Right ventricle myocardium inferior (tissue), 1 donor: ENCODE measurements at regions of chr9 and their contacts with region 1.

Region 1: DNA sequence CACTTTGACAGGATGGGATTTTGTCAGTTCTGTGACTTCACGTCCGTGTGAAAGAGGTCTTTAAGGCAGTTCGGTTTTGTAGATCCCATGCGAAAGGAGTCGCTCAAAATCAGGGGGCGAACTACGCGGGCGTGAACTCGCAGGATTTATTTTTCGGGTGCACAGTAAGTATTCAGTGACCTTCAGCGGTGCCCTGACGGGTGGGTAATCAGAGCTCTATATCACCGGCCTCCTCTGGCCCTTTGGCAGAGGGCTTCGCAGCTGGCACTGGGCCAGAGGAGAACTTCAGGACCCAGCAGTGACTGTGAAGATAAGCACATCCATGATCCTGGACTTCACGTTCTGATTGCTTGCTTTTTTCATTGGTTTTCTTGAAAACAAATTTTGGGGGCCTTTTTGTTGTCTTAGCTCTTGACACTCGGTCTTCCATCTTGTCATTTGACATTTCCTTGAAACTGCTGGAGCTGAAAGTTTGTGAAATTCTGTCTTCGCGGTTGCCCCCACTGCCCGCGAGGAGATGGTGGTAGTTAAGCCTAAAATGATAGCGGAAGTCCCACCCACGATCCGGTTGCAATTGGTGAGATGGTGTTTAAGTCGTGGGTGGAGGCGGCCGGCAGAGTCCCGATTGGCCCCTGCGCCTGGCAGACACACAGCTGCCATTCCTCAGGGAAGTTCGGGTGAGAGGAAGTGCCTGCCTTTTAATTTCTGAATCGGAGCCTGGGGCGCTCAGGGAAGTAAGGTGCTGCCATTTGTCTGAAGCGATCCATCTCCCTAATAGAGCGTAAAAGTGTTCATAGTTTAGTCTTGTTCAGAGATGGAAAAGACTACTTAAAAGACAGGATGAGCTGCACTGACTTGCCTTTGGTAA is at the start of gene FAM120AOS:
- DNase-seq: peak; percentile 96
- ATAC-seq: peak; percentile 89
- total RNA-seq, gene FAM120AOS: 28.4 TPM

Region 2: GRCh38 chr9:93095205-93096130 is 357.8 kb before region 1 on chr9:
- intact Hi-C with region 1: loop called (anchors 2 kb)
- DNase-seq: peak; percentile 100
- ATAC-seq: peak; percentile 91

Region 3: DNA sequence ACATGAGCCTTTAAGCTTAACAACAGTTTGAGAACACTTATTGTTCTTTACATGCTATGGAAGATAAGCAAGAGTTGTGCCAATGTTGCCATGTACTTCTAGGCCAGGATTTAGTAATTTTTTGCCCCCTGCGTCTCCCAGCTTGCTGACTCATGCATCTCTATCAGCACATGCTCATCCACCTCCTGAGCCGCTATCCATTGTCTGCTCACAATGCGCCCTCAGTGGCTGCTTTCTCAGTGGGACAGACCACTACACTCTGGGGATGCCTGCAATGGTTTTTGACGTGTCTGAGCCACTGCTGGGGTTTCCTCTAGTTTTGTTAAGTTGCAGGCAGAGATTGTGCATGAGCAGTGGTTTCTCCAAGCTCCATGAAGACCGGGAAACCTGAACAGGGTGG is 72.2 kb after region 1 on chr9:
- intact Hi-C with region 1: loop called (anchors 5 kb)
- DNase-seq: no peak
- ATAC-seq: no peak

Region 4: GRCh38 chr9:93541581-93542349 is 88.5 kb after region 1 on chr9:
- intact Hi-C with region 1: loop called (anchors 5 kb)
- DNase-seq: no peak
- ATAC-seq: peak; percentile 50

Region 5: DNA sequence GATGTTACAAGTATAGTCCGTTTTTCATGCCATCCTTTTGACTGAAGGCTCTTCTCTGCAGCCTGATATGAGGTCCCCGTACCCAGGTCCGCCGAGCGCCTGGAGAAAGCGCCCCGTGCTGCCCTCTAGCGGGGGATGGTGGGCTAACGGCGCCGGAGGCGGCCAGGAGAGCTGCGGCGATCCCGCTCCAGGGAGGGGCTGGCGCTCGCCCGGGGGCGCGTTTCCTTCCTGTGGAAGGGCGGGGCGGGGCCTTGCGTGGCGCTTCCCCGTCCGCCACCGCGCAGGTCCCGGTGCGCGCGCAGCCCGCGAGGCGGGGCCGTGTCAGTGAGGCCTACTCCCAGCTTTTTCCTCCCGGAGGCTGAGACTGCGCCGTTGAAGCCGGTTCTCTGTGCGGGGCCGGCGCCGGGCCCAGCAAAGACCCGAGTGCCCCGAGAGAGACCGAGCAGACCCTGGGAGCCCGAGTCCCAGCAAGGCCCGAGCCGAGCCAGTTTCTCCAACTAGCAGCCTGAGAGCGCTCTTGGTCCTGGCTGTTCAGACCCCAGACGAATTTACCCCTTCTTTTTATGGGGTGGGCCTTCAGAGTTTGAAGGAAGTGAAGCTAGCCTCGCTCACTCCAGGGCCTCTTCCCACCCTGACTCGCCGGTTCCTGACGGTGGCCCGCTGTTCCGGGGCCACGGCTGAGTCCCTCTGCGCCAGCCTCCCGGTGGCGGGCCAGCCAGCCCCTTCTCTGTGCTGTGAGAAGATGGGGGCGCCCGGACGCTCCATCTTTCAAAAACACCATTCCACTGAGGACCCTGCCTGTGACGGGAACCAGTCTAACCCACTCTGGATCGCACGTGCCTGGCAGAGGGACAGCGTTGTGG is 113.4 kb after region 1 on chr9:
- intact Hi-C with region 1: loop called (anchors 1 kb)
- DNase-seq: peak; percentile 99
- ATAC-seq: peak; percentile 100